Adrenal gland (tissue), 19 donors: ENCODE measurements at regions of chr18 and their contacts with region 1.

Region 1: DNA sequence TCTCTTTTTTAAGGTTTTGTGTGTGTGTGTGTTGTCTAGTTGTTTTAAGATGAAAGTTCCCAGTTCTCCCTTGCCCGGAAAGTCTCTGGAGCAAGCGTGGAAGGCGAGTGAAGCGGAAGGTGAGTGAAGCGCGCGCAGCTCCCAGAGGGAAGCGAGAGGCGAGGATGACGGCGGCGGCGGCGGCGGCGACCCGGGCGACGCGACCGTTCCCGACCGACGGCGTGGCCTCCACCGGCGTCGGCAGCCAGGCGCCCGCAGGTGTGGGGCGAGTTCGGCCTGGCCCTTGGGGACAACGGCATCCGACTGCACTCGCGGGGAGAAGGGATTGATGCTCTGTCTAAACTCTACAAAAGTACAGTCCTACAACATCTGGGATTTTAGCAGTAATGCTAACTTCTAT is 321.9 kb downstream of the CELF4 start:
- DNase-seq: no peak
- H3K4me3 ChIP-seq: no peak overlapping the region
- H3K27ac ChIP-seq: no peak overlapping the region
- H3K4me1 ChIP-seq: no peaks in the 10 kb centered on the region
- H3K27me3 ChIP-seq: peaks cover 12% of the 10 kb centered on the region
- CTCF ChIP-seq: no peak
- POLR2A ChIP-seq: no peak

Region 2: DNA sequence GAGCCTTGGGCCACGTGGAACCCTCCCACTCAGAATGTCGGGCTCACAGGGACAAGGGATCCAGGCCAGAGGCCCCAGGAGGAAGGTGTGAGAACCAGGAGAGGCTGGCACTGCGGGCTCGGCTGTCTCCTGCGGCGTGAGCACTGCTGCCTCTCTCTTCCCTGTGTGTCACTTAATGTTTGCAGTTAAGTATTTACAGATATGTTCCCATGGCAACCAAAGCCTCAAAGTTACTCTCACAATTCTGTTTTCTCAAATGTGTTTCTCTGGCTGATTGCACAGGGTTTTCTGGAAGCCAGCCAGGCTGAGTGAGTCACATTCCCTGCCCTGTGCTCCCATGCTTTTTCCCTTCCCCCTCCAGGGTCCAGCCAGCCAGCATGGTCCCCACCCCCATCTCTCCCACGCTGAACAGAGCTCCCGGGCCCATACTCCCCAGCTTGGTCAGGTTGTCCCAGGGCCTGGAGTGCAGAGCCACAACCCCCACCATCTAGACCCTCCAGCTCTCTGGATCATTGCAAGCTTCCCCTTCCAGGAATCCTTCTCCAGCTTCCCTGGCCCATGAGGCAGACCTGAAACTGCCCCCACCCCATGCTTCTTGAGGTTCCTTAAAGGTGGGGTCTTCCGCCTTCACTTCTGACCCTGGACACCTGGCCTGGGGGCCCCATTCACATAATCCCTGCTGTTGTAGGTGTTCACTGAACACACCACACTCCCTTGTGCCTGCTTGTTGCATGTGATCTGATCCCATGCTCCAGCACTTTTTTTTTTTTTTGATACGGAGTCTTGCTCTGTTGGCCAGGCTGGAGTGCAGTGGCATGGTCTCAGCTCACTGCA is 55.9 kb after region 1 on chr18:
- intact Hi-C with region 1: loop called in 1 of 2 experiments (anchors 10 kb)
- DNase-seq: peak; percentile 84 to 97 (median 91)
- H3K4me3 ChIP-seq: no peak overlapping the region
- H3K27ac ChIP-seq: no peak overlapping the region
- H3K4me1 ChIP-seq: no peaks in the 10 kb centered on the region
- H3K27me3 ChIP-seq: no peaks in the 10 kb centered on the region
- CTCF ChIP-seq: no peak
- POLR2A ChIP-seq: no peak